Right cardiac atrium (tissue), 5 donors: ENCODE measurements at regions of chr10 and their contacts with region 1.

Region 1: DNA sequence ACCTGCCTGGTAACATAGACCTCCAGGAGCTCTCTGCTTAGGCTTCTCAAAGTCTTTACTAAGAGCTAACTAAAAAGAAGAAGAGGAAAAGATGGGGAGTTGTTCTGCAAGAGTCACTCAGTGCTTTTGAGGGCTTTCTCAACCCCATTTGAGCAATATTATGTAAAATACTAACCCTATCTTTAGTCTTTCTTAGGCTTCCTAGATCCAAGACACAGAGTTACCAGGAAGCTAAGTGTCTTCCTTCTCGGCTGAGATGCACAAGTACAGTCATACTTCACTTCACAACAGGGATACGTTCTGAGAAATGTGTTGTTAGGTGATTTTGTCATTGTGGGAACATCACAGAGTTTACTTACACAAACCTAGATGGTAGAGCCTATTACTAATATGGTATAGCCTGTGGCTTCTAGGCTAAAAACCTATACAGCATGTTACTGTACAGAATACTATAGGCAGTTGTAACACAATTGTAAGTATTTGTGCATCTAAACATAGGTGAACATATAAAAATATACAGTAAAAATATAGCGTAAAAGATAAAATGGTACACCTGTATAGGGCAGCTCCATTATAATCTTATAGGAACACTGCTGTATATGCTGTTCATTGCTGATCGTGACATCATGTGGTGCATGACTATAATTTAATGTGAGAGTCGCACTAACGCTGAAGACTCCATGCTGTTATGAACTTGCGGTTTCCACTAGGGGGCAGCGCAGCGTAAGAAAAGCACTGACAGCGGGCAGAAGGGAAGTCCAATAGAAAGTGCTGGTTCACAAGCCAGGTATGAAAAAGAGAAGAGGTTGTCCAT is 16.3 kb downstream of the ANKRD22 start:
- DNase-seq: peak; percentile 83 to 92 (median 90)
- ATAC-seq: peak; percentile 94 to 95
- H3K4me3 ChIP-seq: no peak overlapping the region
- H3K27ac ChIP-seq: no peak overlapping the region
- H3K4me1 ChIP-seq: no peaks in the 10 kb centered on the region
- H3K27me3 ChIP-seq: no peaks in the 10 kb centered on the region

Region 2: DNA sequence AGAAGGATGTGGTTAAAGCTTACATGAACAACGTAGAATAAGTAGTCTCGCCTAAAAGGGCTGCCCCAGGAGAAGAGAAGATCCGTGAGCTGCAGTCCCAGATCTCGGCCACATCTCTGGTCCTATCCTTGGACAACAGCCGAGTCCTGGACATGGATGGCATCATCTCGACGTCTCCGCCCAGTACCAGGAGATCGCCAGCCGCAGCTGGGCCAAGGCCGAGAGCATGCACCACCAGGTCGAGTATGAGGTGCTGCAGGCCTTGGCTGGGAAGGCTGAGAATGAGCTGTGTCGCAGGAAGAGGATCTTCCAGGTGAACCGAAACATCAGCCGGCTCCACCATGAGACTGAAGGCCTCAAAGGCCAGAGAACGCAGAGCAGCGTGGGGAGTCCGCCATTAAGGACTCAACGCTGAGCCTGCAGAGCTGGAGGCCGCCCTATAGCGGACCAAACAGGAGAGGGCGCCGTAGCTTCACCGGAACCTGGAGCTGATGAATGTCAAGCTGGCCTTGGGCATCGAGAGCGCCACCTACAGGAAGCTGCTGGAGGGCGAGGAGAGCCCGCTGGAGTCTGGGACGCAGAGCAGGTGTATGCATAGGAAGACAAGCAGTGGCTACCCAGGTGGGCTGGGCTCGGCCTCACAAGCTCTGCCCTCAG is 107.1 kb before region 1 on chr10:
- intact Hi-C with region 1: no loop called
- DNase-seq: peak in 2 of 3 donors; percentile 48 to 57
- ATAC-seq: no peak
- H3K4me3 ChIP-seq: no peak overlapping the region
- H3K27ac ChIP-seq: no peak overlapping the region
- H3K4me1 ChIP-seq: no peaks in the 10 kb centered on the region
- H3K27me3 ChIP-seq: no peaks in the 10 kb centered on the region

Region 3: GRCh38 chr10:88932539-88933256 is 97.4 kb after region 1 on chr10:
- intact Hi-C with region 1: loop called (anchors 2 to 5 kb)
- DNase-seq: peak; percentile 48 to 70 (median 66)
- ATAC-seq: peak; percentile 68 to 80
- H3K4me3 ChIP-seq: no peak overlapping the region
- H3K27ac ChIP-seq: peak overlapping the region; percentile 50
- H3K4me1 ChIP-seq: peaks cover 3% of the 10 kb centered on the region
- H3K27me3 ChIP-seq: no peaks in the 10 kb centered on the region

Region 4: DNA sequence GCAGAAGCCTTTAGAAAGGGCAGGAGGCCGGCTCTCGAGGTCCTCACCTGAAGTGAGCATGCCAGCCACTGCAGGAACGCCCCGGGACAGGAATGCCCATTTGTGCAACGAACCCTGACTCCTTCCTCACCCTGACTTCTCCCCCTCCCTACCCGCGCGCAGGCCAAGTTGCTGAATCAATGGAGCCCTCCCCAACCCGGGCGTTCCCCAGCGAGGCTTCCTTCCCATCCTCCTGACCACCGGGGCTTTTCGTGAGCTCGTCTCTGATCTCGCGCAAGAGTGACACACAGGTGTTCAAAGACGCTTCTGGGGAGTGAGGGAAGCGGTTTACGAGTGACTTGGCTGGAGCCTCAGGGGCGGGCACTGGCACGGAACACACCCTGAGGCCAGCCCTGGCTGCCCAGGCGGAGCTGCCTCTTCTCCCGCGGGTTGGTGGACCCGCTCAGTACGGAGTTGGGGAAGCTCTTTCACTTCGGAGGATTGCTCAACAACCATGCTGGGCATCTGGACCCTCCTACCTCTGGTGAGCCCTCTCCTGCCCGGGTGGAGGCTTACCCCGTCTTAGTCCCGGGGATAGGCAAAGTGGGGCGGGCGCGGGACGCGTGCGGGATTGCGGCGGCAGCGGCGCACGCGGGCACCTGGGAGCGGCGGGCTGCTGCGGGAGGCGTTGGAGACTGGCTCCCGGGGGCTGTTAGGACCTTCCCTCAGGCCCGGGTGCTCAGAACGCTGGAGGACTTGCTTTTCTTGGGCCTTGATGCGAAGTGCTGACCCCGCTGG is 155.3 kb after region 1 on chr10 and contains the start of gene FAS:
- intact Hi-C with region 1: loop called in 1 of 4 experiments (anchors 5 kb)
- DNase-seq: peak; percentile 75 to 90 (median 88)
- ATAC-seq: peak; percentile 90 to 91
- H3K4me3 ChIP-seq: peak within 1 kb of the TSS; percentile 77
- H3K27ac ChIP-seq: peak within 1 kb of the TSS; percentile 95
- H3K4me1 ChIP-seq: peaks cover 2% of the 10 kb centered on the region
- H3K27me3 ChIP-seq: no peaks in the 10 kb centered on the region
- total RNA-seq, gene FAS: 5.7 to 10.1 (median 6.5) TPM

Region 5: GRCh38 chr10:89007129-89007893 is 172.0 kb after region 1 on chr10:
- intact Hi-C with region 1: no loop called
- DNase-seq: no peak
- ATAC-seq: no peak
- H3K4me3 ChIP-seq: no peak overlapping the region
- H3K27ac ChIP-seq: no peak overlapping the region
- H3K4me1 ChIP-seq: no peaks in the 10 kb centered on the region
- H3K27me3 ChIP-seq: no peaks in the 10 kb centered on the region

Region 6: DNA sequence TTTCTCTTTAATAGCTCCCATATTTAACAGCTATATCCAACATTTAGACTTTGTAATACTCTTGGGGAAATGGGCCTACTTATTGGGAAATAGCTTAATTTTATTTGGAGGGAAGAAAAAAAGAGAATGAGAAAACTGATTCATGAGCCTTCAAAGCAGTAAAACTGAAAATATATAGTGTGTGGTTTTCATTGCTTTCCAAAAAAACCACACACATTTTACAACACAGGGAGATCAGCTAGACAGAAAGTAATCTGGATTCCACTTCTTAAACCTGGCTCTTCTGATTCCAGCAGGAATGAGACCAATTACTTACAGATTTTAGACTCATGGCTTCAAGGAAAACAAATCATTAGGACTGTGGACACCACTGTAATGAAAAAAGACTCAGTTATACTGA is 323.1 kb after region 1 on chr10:
- intact Hi-C with region 1: no loop called
- DNase-seq: no peak
- ATAC-seq: no peak
- H3K4me3 ChIP-seq: no peak overlapping the region
- H3K27ac ChIP-seq: no peak overlapping the region
- H3K4me1 ChIP-seq: no peaks in the 10 kb centered on the region
- H3K27me3 ChIP-seq: no peaks in the 10 kb centered on the region

Region 7: GRCh38 chr10:89217057-89217990 is 382.0 kb after region 1 on chr10:
- intact Hi-C with region 1: loop called in 2 of 4 experiments (anchors 5 to 10 kb)
- DNase-seq: peak in 2 of 3 donors; percentile 33 to 76
- ATAC-seq: peak in 1 of 2 donors; percentile 29
- H3K4me3 ChIP-seq: no peak overlapping the region
- H3K27ac ChIP-seq: peak overlapping the region; percentile 68
- H3K4me1 ChIP-seq: peaks cover 2% of the 10 kb centered on the region
- H3K27me3 ChIP-seq: no peaks in the 10 kb centered on the region

Region 8: GRCh38 chr10:89224739-89225443 is 389.6 kb after region 1 on chr10:
- intact Hi-C with region 1: loop called in 1 of 4 experiments (anchors 10 kb)
- DNase-seq: peak; percentile 39 to 80 (median 72)
- ATAC-seq: peak; percentile 69 to 92
- H3K4me3 ChIP-seq: no peak overlapping the region
- H3K27ac ChIP-seq: peak overlapping the region; percentile 88
- H3K4me1 ChIP-seq: no peaks in the 10 kb centered on the region
- H3K27me3 ChIP-seq: no peaks in the 10 kb centered on the region

Region 9: GRCh38 chr10:89262086-89263051 is 427.1 kb after region 1 on chr10:
- intact Hi-C with region 1: no loop called
- DNase-seq: no peak
- ATAC-seq: peak in 1 of 2 donors; percentile 20
- H3K4me3 ChIP-seq: no peak overlapping the region
- H3K27ac ChIP-seq: no peak overlapping the region
- H3K4me1 ChIP-seq: peaks cover 4% of the 10 kb centered on the region
- H3K27me3 ChIP-seq: no peaks in the 10 kb centered on the region